GM12878 (cell line): ENCODE measurements at regions of chr6 and their contacts with region 1.

Region 1: GRCh38 chr6:87197547-87197946 is 42.2 kb downstream of the ZNF292 start:
- DNase-seq: peak; percentile 49
- ATAC-seq: peak; percentile 77
- H3K4me3 ChIP-seq: no peak overlapping the region
- H3K27ac ChIP-seq: peak overlapping the region; percentile 58; the same call in 1 of the 2 replicates
- H3K4me1 ChIP-seq: peaks cover 36% of the 10 kb centered on the region
- H3K27me3 ChIP-seq: no peaks in the 10 kb centered on the region
- CTCF ChIP-seq: no peak
- EP300 ChIP-seq: peak in 1 of 2 experiments; percentile 30; a peak in 1 of 4 replicates
- POLR2A ChIP-seq: no peak
- RAD21 ChIP-seq: no peak

Region 2: GRCh38 chr6:86961455-86962200 is 235.9 kb before region 1 on chr6:
- CTCF ChIA-PET with region 1: no interaction called
- POLR2A ChIA-PET with region 1: no interaction called
- RAD21 ChIA-PET with region 1: no interaction called
- SMC1A ChIA-PET with region 1: no interaction called
- in situ Hi-C with region 1: no loop called
- intact Hi-C with region 1: no loop called
- DNase-seq: no peak
- ATAC-seq: no peak
- H3K4me3 ChIP-seq: no peak overlapping the region
- H3K27ac ChIP-seq: no peak overlapping the region
- H3K4me1 ChIP-seq: no peaks in the 10 kb centered on the region
- H3K27me3 ChIP-seq: no peaks in the 10 kb centered on the region
- CTCF ChIP-seq: no peak
- EP300 ChIP-seq: no peak
- POLR2A ChIP-seq: no peak
- RAD21 ChIP-seq: no peak

Region 3: GRCh38 chr6:87139236-87139635 is 58.3 kb before region 1 on chr6:
- CTCF ChIA-PET with region 1: no interaction called
- POLR2A ChIA-PET with region 1: interaction called, 11 read pairs
- RAD21 ChIA-PET with region 1: no interaction called
- SMC1A ChIA-PET with region 1: no interaction called
- in situ Hi-C with region 1: no loop called
- intact Hi-C with region 1: no loop called
- DNase-seq: no peak
- ATAC-seq: peak; percentile 91
- H3K4me3 ChIP-seq: no peak overlapping the region
- H3K27ac ChIP-seq: no peak overlapping the region
- H3K4me1 ChIP-seq: no peaks in the 10 kb centered on the region
- H3K27me3 ChIP-seq: no peaks in the 10 kb centered on the region
- CTCF ChIP-seq: peak; percentile 69 to 84 (median 77)
- EP300 ChIP-seq: no peak
- POLR2A ChIP-seq: no peak
- RAD21 ChIP-seq: peak; percentile 95

Region 4: GRCh38 chr6:87154993-87155841 is 42.3 kb before region 1 on chr6 and contains the start of gene ZNF292:
- CTCF ChIA-PET with region 1: interaction called, 5 read pairs
- POLR2A ChIA-PET with region 1: interaction called, 7 read pairs
- RAD21 ChIA-PET with region 1: interaction called, 4 read pairs
- SMC1A ChIA-PET with region 1: interaction called, 5 read pairs
- in situ Hi-C with region 1: no loop called
- intact Hi-C with region 1: loop called (anchors 1 kb)
- DNase-seq: peak; percentile 96
- ATAC-seq: peak; percentile 85
- H3K4me3 ChIP-seq: peak within 1 kb of the TSS; percentile 96
- H3K27ac ChIP-seq: peak within 1 kb of the TSS; percentile 92
- H3K4me1 ChIP-seq: peaks cover 3% of the 10 kb centered on the region; the same call in 1 of the 2 replicates
- H3K27me3 ChIP-seq: no peaks in the 10 kb centered on the region
- CTCF ChIP-seq: no peak; a peak in 2 of 6 replicates
- EP300 ChIP-seq: peak in 1 of 2 experiments; percentile 73; a peak in 2 of 4 replicates
- POLR2A ChIP-seq: peak; percentile 94
- RAD21 ChIP-seq: peak; percentile 25; the same call in 1 of the 2 replicates
- polyA plus RNA-seq, gene ZNF292: 11.1 to 20.9 TPM

Region 5: GRCh38 chr6:87174078-87174579 is 23.4 kb before region 1 on chr6:
- CTCF ChIA-PET with region 1: no interaction called
- POLR2A ChIA-PET with region 1: interaction called, 12 read pairs
- RAD21 ChIA-PET with region 1: interaction called, 3 read pairs
- SMC1A ChIA-PET with region 1: interaction called, 3 read pairs
- in situ Hi-C with region 1: no loop called
- intact Hi-C with region 1: no loop called
- DNase-seq: no peak
- ATAC-seq: peak; percentile 66
- H3K4me3 ChIP-seq: peak overlapping the region; percentile 27; the same call in 1 of the 2 replicates
- H3K27ac ChIP-seq: peak overlapping the region; percentile 38; the same call in 1 of the 2 replicates
- H3K4me1 ChIP-seq: peaks cover 23% of the 10 kb centered on the region
- H3K27me3 ChIP-seq: no peaks in the 10 kb centered on the region
- CTCF ChIP-seq: no peak
- EP300 ChIP-seq: no peak
- POLR2A ChIP-seq: no peak
- RAD21 ChIP-seq: no peak

Region 6: DNA sequence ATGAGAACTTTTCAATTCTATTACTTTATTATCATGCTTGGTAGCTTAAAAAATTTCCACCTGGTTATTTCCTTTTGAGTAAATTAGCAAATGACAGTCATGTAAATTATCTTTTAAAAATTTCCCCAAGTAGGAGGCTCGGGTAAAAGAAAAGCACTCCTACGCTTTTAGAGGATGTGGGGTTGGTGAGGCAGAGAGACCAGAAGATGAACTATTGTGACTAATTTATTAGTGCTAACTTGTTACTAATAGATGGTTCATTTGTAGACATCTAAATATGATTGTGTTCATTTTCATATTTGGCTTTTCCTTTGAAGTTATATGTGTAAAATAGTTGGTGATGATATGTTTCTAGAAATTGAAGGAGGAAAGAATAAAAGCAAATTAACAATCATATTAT is 15.2 kb before region 1 on chr6:
- CTCF ChIA-PET with region 1: interaction called, 3 read pairs
- POLR2A ChIA-PET with region 1: interaction called, 6 read pairs
- RAD21 ChIA-PET with region 1: interaction called, 5 read pairs
- SMC1A ChIA-PET with region 1: interaction called, 13 read pairs
- in situ Hi-C with region 1: no loop called
- intact Hi-C with region 1: loop called (anchors 2 kb)
- DNase-seq: peak; percentile 47
- ATAC-seq: peak; percentile 89
- H3K4me3 ChIP-seq: no peak overlapping the region
- H3K27ac ChIP-seq: peak overlapping the region; percentile 65; the same call in 1 of the 2 replicates
- H3K4me1 ChIP-seq: peaks cover 21% of the 10 kb centered on the region
- H3K27me3 ChIP-seq: no peaks in the 10 kb centered on the region
- CTCF ChIP-seq: no peak
- EP300 ChIP-seq: peak in 1 of 2 experiments; percentile 56; a peak in 1 of 4 replicates
- POLR2A ChIP-seq: no peak
- RAD21 ChIP-seq: no peak

Region 7: DNA sequence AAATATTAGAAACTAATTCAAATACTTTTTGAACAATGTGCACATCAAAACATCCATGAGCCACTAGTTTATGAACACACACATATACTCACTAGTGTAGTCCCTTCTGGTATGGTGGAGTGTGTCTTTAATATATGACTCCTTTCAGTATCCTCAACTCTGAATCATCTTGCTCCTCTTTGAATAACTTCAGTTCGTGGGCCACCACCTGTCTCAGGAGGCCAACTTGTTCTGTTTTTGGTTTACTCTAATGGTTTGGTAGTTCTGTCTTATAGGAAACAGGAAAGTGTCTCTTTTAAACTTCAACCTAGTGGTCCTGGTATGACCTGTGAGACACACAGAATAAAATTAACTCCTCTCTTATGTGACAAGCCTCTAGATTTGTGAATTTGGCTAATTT is 13.4 kb after region 1 on chr6:
- CTCF ChIA-PET with region 1: interaction called, 4 read pairs
- POLR2A ChIA-PET with region 1: no interaction called
- RAD21 ChIA-PET with region 1: interaction called, 7 read pairs
- SMC1A ChIA-PET with region 1: interaction called, 10 read pairs
- in situ Hi-C with region 1: no loop called
- intact Hi-C with region 1: no loop called
- DNase-seq: peak; percentile 49
- ATAC-seq: peak; percentile 96
- H3K4me3 ChIP-seq: no peak overlapping the region
- H3K27ac ChIP-seq: peak overlapping the region; percentile 6; the same call in 1 of the 2 replicates
- H3K4me1 ChIP-seq: peaks cover 34% of the 10 kb centered on the region
- H3K27me3 ChIP-seq: no peaks in the 10 kb centered on the region
- CTCF ChIP-seq: no peak
- EP300 ChIP-seq: no peak
- POLR2A ChIP-seq: no peak
- RAD21 ChIP-seq: no peak

Region 8: GRCh38 chr6:87431273-87431672 is 233.7 kb after region 1 on chr6:
- CTCF ChIA-PET with region 1: no interaction called
- POLR2A ChIA-PET with region 1: no interaction called
- RAD21 ChIA-PET with region 1: no interaction called
- SMC1A ChIA-PET with region 1: no interaction called
- in situ Hi-C with region 1: no loop called
- intact Hi-C with region 1: no loop called
- DNase-seq: no peak
- ATAC-seq: no peak
- H3K4me3 ChIP-seq: no peak overlapping the region
- H3K27ac ChIP-seq: no peak overlapping the region
- H3K4me1 ChIP-seq: no peaks in the 10 kb centered on the region
- H3K27me3 ChIP-seq: no peaks in the 10 kb centered on the region
- CTCF ChIP-seq: no peak
- EP300 ChIP-seq: no peak
- POLR2A ChIP-seq: no peak
- RAD21 ChIP-seq: no peak

Region 9: GRCh38 chr6:87645080-87645479 is 447.5 kb after region 1 on chr6:
- CTCF ChIA-PET with region 1: no interaction called
- POLR2A ChIA-PET with region 1: interaction called, 10 read pairs
- RAD21 ChIA-PET with region 1: no interaction called
- SMC1A ChIA-PET with region 1: no interaction called
- in situ Hi-C with region 1: no loop called
- intact Hi-C with region 1: no loop called
- DNase-seq: no peak
- ATAC-seq: peak; percentile 79
- H3K4me3 ChIP-seq: no peak overlapping the region
- H3K27ac ChIP-seq: peak overlapping the region; percentile 63; the same call in 1 of the 2 replicates
- H3K4me1 ChIP-seq: peaks cover 2% of the 10 kb centered on the region; the same call in 1 of the 2 replicates
- H3K27me3 ChIP-seq: no peaks in the 10 kb centered on the region
- CTCF ChIP-seq: no peak
- EP300 ChIP-seq: no peak
- POLR2A ChIP-seq: no peak
- RAD21 ChIP-seq: no peak